ENCODE measurements at regions of chr17 and their contacts with region 1.

Region 1: GRCh38 chr17:56592487-56593085 is 913 bp upstream of the NOG start:
- DNase-seq: peak; percentile 64 to 87
- H3K4me3 ChIP-seq: peak overlapping the region; percentile 52 to 63 (median 57)
- H3K27ac ChIP-seq: peak overlapping the region in 1 of 5 donors; percentile 84
- H3K4me1 ChIP-seq: peaks cover 46 to 55% (median 53%) of the 10 kb centered on the region in 4 donors
- H3K27me3 ChIP-seq: peaks cover 0 to 97% (median 69%) of the 10 kb centered on the region in 3 donors
- CTCF ChIP-seq: peak in 5 of 7 experiments; percentile 34 to 99 (median 96)
- EP300 ChIP-seq: no peak
- POLR2A ChIP-seq: no peak

Region 2: DNA sequence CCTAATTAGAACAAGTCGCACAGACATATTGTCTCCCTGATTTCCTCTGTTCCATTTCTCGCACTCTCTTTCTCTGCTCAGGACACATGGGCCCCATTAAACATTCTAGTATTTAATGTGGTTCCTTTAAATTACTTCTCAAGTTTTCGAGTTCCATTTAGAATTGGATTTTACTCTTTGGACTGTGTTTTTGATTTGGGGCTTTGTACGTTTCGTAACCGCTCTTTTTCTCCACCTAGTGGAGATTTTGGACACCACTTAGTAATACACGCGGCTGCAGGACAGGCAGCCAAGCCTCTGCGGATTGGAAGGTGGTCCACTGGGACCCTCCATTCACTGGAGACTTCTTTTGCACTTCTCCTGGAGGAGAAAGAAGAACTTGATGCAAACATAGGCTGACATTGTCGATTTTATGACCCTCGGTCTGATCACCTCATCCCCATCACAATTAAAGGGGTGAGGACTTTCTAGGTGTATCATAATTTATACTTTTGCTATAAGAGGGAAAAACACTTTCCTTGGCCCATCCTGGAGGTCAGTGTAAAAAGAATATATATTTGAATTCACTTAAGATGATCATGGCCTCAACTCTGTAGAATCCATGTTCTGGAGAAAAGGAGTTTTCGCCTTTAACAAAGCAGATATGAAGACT is 86.7 kb after region 1 on chr17:
- intact Hi-C with region 1: loop called (anchors 10 kb)
- DNase-seq: peak in 1 of 2 donors; percentile 74
- H3K4me3 ChIP-seq: peak overlapping the region; percentile 9 to 29 (median 27)
- H3K27ac ChIP-seq: no peak overlapping the region
- H3K4me1 ChIP-seq: peaks cover 7 to 12% (median 10%) of the 10 kb centered on the region in 4 donors
- H3K27me3 ChIP-seq: peaks cover 4 to 73% (median 49%) of the 10 kb centered on the region in 3 donors
- CTCF ChIP-seq: peak in 4 of 7 experiments; percentile 30 to 45 (median 42)
- EP300 ChIP-seq: no peak
- POLR2A ChIP-seq: no peak

Region 3: DNA sequence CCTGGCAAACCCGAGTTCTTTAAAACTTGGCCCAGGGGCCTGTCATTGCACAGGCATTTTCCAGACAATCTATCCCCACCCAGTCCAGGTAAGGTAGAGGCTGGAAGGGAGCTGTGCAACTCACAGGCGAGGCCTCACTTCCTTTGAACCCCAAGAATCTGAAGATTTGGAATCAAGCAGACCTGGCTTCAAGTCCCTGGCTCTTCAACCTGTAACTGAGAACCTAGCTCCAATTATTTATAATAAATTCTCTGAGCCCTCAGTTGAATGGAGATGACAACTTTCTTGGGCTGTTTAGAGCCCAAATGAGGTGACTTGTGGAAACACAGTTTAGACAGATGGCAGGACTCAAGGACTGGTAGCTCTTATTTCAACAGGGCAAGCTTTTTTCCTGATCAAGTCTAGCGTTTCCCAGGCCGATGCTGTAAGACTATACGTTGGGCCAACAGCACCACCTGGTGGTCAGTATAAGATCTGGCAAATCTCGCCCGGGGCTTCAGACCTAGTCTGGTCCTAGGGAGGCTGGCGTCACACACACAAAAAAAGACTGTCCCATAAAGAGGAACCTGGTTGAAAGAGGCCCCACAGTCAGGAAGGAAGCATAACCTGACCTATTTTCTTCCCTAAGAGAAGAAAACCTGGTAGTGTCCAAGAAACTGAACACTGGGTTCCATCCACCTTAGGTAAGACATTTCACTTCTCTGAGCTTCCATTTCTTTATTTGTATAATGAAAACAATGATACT is 123.2 kb after region 1 on chr17:
- intact Hi-C with region 1: loop called (anchors 2 kb)
- DNase-seq: peak; percentile 80 to 92
- H3K4me3 ChIP-seq: no peak overlapping the region
- H3K27ac ChIP-seq: no peak overlapping the region
- H3K4me1 ChIP-seq: no peaks in the 10 kb centered on the region
- H3K27me3 ChIP-seq: peaks cover 0 to 4% (median 0%) of the 10 kb centered on the region in 3 donors
- CTCF ChIP-seq: peak in 5 of 7 experiments; percentile 48 to 81 (median 72)
- EP300 ChIP-seq: no peak
- POLR2A ChIP-seq: no peak